ENCODE measurements at regions of chr9 and their contacts with region 1.

Region 1: DNA sequence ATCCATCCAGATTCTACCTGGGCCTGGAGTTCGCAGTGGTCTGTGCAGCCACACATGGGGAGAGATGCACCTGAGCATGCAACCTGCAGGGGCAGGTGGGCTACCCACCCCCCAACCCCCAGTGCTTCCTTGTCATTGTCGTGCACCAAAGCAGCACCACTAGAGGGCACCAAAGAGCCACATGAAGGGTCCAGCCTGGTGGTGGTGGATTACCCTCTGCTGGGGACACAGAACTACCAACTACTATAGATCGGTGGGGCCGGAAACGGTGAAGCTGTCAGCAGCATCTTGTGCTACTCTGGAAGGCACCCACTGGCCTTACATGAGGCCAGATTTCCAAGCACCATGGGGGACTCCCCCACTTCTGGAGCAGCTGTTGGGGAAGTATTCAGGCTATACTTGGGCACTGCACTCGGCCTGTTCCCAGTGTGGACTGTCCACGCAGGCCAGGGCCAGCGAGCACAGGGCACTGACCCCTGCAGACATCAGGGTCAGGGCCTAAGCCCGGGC is 60.2 kb upstream of the TBC1D2 start:
- DNase-seq: peak; percentile 80
- ATAC-seq: peak; percentile 93
- H3K4me3 ChIP-seq: no peak overlapping the region
- H3K27ac ChIP-seq: no peak overlapping the region
- H3K4me1 ChIP-seq: no peaks in the 10 kb centered on the region
- H3K27me3 ChIP-seq: no peaks in the 10 kb centered on the region
- CTCF ChIP-seq: peak; percentile 91

Region 2: GRCh38 chr9:98707166-98708102 is 391.8 kb after region 1 on chr9:
- CTCF ChIA-PET with region 1: no interaction called
- POLR2A ChIA-PET with region 1: no interaction called
- intact Hi-C with region 1: loop called (anchors 1 kb)
- DNase-seq: peak; percentile 61
- ATAC-seq: peak; percentile 85
- H3K4me3 ChIP-seq: peak overlapping the region; percentile 60
- H3K27ac ChIP-seq: no peak overlapping the region
- H3K4me1 ChIP-seq: no peaks in the 10 kb centered on the region
- H3K27me3 ChIP-seq: peaks cover 30% of the 10 kb centered on the region
- CTCF ChIP-seq: peak; percentile 58

Region 3: DNA sequence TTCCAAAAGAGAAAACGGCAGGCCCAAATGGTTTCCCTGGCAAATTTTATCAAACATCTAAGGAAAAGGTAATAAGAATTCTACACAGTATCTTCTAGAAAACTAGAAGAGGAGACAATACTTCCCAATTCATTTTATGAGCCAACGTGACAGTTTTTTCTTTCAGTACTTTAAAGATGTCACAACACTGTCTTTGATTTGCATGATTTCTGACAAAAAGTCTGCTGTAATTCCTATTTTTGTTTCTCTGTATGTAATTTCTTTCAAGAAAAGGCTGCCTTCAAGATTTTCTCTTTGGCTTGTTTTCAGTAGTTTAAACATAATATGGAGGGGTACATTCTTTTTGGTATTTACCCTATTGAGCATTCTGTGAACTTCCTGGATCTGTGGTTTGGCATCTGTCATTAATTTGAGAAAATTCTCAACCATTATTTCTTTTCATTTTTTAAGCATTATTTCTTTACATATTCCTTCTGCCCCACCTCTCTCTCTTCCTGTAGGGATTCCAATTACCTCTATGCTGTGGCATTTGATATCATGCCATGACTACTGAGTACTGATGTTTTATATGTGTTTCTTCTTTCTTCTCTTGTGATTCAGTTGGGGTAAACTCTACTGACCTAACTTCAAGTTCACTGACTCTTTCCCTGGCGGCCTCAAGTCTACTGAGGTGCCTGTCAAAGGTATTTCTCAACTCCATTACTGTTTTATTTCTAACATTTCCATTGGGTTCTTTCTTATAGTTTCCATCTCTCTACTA is 448.6 kb after region 1 on chr9:
- CTCF ChIA-PET with region 1: no interaction called
- POLR2A ChIA-PET with region 1: no interaction called
- intact Hi-C with region 1: no loop called
- DNase-seq: peak; percentile 13
- ATAC-seq: peak; percentile 82
- H3K4me3 ChIP-seq: no peak overlapping the region
- H3K27ac ChIP-seq: no peak overlapping the region
- H3K4me1 ChIP-seq: no peaks in the 10 kb centered on the region
- H3K27me3 ChIP-seq: no peaks in the 10 kb centered on the region
- CTCF ChIP-seq: no peak

Region 4: DNA sequence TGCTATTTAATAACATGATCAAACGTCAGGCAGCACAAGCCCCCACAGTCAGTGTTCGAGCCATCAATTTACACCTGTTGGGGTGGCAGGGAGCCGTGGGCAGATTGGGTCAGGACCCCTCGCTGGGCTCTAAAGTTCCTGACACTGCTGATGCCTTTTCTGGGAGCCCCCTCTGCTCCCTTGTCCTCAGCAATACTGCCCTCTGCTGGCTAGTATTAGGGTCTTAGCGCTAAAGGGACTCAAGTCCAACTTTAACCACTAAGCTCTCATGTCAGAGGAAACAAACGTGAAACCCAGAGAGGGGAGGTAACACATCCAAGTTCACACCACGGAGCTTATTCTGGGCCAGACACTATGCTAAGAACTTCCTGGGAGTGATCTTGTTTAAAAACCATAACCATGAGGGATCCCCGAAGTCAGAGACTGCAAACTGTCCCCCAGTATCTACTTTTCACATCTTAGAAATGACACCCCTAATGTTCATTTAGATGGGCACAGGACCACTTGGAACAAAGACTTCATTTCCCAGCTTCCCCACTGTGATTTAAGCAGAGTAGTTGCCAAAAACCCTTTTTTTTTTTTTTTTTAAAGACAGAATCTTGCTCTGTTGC is 460.3 kb after region 1 on chr9:
- CTCF ChIA-PET with region 1: no interaction called
- POLR2A ChIA-PET with region 1: no interaction called
- intact Hi-C with region 1: loop called (anchors 1 kb)
- DNase-seq: peak; percentile 64
- ATAC-seq: peak; percentile 36
- H3K4me3 ChIP-seq: no peak overlapping the region
- H3K27ac ChIP-seq: no peak overlapping the region
- H3K4me1 ChIP-seq: peaks cover 28% of the 10 kb centered on the region
- H3K27me3 ChIP-seq: no peaks in the 10 kb centered on the region
- CTCF ChIP-seq: peak; percentile 80

Region 5: GRCh38 chr9:98791147-98792095 is 475.8 kb after region 1 on chr9:
- CTCF ChIA-PET with region 1: no interaction called
- POLR2A ChIA-PET with region 1: no interaction called
- intact Hi-C with region 1: loop called (anchors 1 kb)
- DNase-seq: peak; percentile 92
- ATAC-seq: peak; percentile 81
- H3K4me3 ChIP-seq: peak overlapping the region; percentile 20; the same call in 1 of the 2 replicates
- H3K27ac ChIP-seq: peak overlapping the region; percentile 69
- H3K4me1 ChIP-seq: peaks cover 31% of the 10 kb centered on the region
- H3K27me3 ChIP-seq: no peaks in the 10 kb centered on the region
- CTCF ChIP-seq: peak; percentile 91